ENCODE measurements at regions of chr18 and their contacts with region 1.

Region 1: DNA sequence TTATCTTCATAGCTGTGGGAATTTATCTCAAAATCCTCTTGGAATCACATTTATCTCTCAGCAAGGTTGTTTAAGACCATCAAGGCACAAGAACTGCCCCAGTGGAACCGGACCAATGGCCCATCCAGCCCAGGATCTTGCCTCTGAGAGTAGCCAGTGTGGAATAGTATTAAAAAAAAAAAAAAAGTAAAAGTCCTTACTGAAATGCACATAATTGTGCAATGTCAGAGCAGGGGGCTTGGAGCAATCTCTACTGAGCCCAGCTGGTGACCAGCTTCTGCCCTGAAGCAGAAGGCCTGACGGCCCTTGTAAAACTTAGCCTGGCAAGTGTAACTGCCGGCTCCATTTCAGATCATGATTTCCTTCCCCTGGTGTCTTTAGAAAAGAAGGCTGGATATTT is 355.6 kb upstream of the PIK3C3 start:
- DNase-seq: peak in 1 of 5 donors; percentile 34
- ATAC-seq: peak in 1 of 4 donors; percentile 32
- H3K4me3 ChIP-seq: no peak overlapping the region
- H3K27ac ChIP-seq: no peak overlapping the region
- H3K4me1 ChIP-seq: no peaks in the 10 kb centered on the region
- H3K27me3 ChIP-seq: no peaks in the 10 kb centered on the region
- CTCF ChIP-seq: no peak
- POLR2A ChIP-seq: no peak

Region 2: GRCh38 chr18:41410007-41410406 is 189.5 kb before region 1 on chr18:
- intact Hi-C with region 1: no loop called
- DNase-seq: no peak
- ATAC-seq: no peak
- H3K4me3 ChIP-seq: no peak overlapping the region
- H3K27ac ChIP-seq: no peak overlapping the region
- H3K4me1 ChIP-seq: no peaks in the 10 kb centered on the region
- H3K27me3 ChIP-seq: no peaks in the 10 kb centered on the region
- CTCF ChIP-seq: no peak
- POLR2A ChIP-seq: no peak

Region 3: DNA sequence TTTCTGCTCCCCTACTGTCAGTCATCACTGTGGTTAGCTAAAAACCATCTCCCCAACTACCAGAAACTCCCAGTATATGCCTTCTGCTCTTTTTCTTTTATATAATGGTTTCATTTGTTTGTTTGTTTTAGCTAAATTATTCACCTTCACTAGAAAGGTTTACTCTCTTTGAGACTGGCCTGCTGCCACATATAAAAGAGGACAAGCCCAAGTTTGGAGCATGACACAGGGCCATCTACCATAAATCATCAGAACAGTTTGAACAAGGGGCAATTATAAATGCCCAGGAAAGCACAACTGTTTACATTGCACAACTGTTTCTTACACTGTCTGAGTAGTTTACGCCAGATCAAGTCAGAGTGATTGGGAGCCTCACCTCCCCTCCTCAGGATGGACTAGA is 115.4 kb before region 1 on chr18:
- intact Hi-C with region 1: no loop called
- DNase-seq: no peak
- ATAC-seq: no peak
- H3K4me3 ChIP-seq: no peak overlapping the region
- H3K27ac ChIP-seq: no peak overlapping the region
- H3K4me1 ChIP-seq: no peaks in the 10 kb centered on the region
- H3K27me3 ChIP-seq: no peaks in the 10 kb centered on the region
- CTCF ChIP-seq: no peak
- POLR2A ChIP-seq: no peak

Region 4: DNA sequence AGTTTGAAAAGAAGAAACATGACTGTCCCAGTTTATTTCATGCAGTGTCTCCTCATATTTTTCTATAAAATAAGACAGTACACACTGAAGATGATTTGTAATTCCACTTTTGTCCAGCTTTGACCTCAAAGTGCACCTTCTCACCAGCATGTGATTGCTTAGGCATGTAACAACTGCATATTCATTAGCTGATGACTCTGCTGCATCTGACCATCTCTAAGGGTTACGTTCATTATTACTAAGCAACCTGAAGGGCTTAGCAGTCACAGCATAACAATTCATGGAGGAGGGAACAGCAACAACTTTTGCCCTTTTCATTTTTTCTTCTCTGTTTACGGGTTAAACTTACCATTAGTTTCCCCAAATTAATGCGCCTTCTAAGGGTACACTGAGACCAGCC is 25.0 kb after region 1 on chr18:
- intact Hi-C with region 1: loop called in 1 of 10 experiments (anchors 1 kb)
- DNase-seq: no peak
- ATAC-seq: no peak
- H3K4me3 ChIP-seq: no peak overlapping the region
- H3K27ac ChIP-seq: no peak overlapping the region
- H3K4me1 ChIP-seq: no peaks in the 10 kb centered on the region
- H3K27me3 ChIP-seq: no peaks in the 10 kb centered on the region
- CTCF ChIP-seq: no peak
- POLR2A ChIP-seq: no peak

Measured in heart left ventricle (tissue), 16 donors.